ENCODE measurements at regions of chr22 and their contacts with region 1.

Region 1: DNA sequence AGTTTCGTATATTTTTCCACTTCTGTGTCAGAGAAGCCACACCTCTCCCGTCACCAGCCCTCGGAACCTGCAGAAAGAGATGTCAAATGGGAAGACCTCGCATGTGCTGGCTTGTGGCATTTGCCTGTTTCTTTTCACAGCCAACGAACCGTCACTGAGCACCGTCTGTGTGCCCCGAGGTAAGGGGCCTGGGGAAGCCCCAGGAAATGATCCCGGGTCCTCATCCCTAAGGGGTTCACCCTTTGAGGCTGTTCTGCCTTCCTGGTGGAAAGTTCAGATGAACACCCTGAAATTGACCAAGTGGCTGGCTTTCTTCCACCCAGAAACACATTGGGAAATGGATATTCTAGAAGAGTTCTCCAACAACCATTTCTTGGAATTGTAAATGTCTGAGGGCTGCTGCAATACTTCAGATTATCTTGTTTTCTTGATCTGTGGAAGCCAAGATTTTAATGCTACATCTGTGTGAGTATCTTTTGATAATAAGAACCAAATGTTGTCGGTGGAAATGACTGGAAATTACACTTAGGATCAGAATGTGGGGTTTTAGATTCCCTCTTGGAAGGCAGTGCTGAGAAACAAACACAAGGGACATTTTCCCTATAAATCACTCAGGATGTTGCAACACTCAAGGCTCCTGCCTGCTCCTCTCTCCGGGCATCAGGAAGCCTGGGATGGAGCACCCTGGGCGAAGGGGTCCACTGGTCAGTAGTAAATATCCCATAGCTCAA is 37.6 kb downstream of the RIBC2 start:
- DNase-seq: no peak
- ATAC-seq: no peak
- H3K4me3 ChIP-seq: no peak overlapping the region
- H3K27ac ChIP-seq: no peak overlapping the region
- H3K4me1 ChIP-seq: no peaks in the 10 kb centered on the region
- H3K27me3 ChIP-seq: no peaks in the 10 kb centered on the region; a peak in 2 of 4 replicates
- CTCF ChIP-seq: no peak
- EP300 ChIP-seq: no peak
- POLR2A ChIP-seq: no peak
- RAD21 ChIP-seq: no peak

Region 2: DNA sequence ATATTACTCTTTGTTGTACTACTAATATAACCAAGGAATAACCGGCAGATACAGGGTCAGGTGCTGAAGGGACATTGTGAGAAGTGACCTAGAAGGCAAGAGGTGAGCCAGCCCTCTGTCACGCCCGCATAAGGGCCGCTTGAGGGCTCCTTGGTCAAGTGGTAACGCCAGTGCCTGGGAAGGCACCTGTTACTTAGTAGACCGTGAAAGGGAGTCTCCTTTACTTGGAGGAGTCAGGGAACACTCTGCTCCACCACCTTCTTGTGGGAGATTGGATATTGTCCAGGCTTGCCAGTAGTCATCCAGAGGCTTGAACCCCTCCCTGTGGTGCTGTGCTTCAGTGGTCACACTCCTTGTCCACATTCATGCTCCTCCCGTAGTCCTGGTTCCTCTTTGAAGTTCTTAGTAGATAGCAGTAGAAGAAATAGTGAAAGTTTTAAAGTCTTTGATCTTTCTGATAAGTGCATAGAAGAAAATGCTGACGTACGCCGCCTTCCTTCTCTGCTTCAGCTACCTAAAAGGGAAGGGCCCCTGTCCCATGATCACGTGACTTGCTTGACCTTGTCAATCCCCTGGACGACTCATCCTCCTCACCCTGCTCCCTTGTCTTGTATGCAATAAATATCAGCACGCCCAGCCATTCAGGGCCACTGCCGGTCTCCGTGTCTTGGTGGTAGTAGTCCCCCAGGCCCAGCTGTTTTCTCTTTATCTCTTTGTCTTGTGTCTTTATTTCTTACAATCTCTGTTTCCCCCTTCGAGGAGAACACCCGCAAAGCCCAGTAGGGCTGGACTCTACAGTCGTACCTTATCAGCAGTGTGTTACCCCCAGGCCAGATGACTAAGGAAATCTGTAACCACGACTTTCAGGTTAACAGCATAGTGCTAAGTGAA is 281.3 kb before region 1 on chr22:
- CTCF ChIA-PET with region 1: no interaction called
- POLR2A ChIA-PET with region 1: no interaction called
- RAD21 ChIA-PET with region 1: no interaction called
- SMC1A ChIA-PET with region 1: no interaction called
- in situ Hi-C with region 1: no loop called
- intact Hi-C with region 1: no loop called
- DNase-seq: no peak
- ATAC-seq: no peak
- H3K4me3 ChIP-seq: no peak overlapping the region
- H3K27ac ChIP-seq: no peak overlapping the region
- H3K4me1 ChIP-seq: peaks cover 3% of the 10 kb centered on the region
- H3K27me3 ChIP-seq: no peaks in the 10 kb centered on the region
- CTCF ChIP-seq: no peak
- EP300 ChIP-seq: no peak
- POLR2A ChIP-seq: no peak
- RAD21 ChIP-seq: no peak

Region 3: DNA sequence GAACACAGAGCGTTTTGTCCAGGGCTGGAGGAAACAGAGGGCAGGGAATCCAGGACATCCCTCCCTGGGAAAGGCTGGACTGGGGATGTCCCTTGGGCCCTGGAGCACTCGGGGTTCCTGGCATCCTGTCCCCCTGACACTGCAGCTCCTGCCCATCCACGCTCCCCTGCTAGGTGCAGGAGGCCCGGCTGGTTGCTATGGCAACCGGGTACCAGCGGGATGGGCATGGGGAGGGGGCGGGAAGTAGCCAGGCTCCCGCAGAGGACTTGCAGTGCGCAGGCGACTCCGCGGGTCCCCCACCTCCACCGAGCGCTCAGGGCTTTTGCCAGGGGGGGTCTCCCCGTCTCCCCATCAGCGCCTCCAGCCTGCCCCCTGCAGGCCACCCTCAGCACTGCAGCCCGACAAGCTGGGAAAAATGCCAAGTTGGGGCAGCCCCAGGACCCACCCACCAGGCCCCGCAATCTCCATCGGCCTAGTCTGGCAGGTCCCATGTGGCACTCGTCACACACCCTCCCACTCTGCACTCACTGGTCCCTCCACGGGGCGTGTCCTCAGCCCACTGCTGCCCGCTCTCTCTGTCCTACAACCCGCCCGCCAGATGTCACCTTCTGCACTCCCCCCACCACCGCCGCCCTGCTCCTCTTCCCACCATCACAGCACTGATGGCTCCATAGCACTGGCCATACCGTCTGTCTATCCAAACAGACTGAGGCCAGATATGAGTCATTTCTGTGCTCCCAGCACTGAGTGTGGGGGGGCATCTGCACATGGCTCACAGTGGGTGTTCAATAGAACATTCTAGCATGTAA is 241.9 kb before region 1 on chr22:
- CTCF ChIA-PET with region 1: no interaction called
- POLR2A ChIA-PET with region 1: no interaction called
- RAD21 ChIA-PET with region 1: no interaction called
- SMC1A ChIA-PET with region 1: no interaction called
- in situ Hi-C with region 1: no loop called
- intact Hi-C with region 1: no loop called
- DNase-seq: no peak
- ATAC-seq: peak; percentile 32
- H3K4me3 ChIP-seq: no peak overlapping the region
- H3K27ac ChIP-seq: no peak overlapping the region
- H3K4me1 ChIP-seq: peaks cover 7% of the 10 kb centered on the region
- H3K27me3 ChIP-seq: no peaks in the 10 kb centered on the region
- CTCF ChIP-seq: peak; percentile 41 to 88 (median 65)
- EP300 ChIP-seq: no peak
- POLR2A ChIP-seq: no peak
- RAD21 ChIP-seq: 0 out of 2 replicates have a peak, but pooled peaks have one; percentile 32

Region 4: DNA sequence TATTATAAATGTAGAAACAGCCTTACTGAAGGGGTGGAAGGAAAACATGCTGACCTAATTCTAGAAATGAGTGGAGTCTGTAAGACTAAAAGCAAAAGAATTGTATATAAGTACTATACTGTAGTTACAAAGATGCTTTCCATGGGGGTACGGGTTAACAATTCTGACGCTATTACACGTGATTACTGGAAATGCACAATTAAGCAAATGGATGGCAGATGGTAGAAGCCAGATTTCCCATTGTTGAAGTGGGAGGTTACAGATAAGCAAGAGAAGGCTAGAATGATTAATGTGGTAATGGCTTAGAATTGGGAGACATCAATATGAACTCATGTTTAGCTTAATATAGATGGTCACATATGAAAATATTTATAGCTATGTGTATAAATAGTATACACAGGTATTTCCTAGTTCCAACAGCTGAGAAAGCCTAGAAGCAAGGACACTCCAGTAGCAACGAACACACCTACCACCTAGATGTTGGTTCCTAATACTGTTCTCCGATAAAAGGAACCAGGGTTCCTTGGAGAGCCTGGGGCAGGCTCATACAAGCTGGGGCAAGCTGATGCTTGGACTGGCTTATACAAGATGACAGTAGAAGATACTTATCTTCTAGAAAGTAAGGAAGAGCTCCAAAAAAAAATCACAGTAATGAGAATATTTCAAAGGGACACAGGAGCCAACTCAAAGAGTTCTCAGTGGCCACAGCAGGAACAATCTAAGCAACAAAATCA is 51.2 kb before region 1 on chr22:
- CTCF ChIA-PET with region 1: no interaction called
- POLR2A ChIA-PET with region 1: no interaction called
- RAD21 ChIA-PET with region 1: no interaction called
- SMC1A ChIA-PET with region 1: no interaction called
- in situ Hi-C with region 1: loop called (anchors 5 kb)
- intact Hi-C with region 1: no loop called
- DNase-seq: no peak
- ATAC-seq: no peak
- H3K4me3 ChIP-seq: no peak overlapping the region
- H3K27ac ChIP-seq: no peak overlapping the region
- H3K4me1 ChIP-seq: no peaks in the 10 kb centered on the region
- H3K27me3 ChIP-seq: no peaks in the 10 kb centered on the region
- CTCF ChIP-seq: no peak
- EP300 ChIP-seq: no peak
- POLR2A ChIP-seq: no peak
- RAD21 ChIP-seq: no peak

Region 5: DNA sequence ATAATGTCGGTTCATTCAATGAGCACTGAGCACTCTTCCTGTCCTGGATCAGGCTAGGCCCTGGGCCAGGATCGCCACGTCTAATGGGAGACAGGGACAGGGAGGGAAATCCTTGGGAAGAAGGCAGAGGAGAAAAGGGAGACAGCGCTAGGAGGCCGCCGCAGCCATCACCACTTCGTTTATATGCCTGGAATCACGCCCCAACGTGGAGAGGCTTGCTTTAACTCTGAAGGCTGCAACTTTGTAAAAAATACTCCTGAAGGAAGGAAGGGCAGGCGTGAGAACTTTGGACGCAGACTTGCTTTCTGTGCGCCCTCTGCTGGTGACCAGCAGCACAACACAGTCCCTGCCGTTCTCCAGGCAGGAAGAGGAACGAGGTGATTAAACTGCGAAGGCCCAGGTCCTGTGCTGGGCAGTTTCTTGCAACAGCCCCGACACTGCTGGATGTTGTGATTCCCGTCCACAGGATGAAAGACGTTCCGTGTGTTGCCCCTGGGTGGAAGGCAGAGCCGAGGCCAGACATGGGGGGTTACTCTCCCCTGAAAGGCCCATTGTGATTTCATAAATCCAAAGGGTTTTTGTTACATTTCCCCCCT is 15.4 kb before region 1 on chr22:
- CTCF ChIA-PET with region 1: no interaction called
- POLR2A ChIA-PET with region 1: no interaction called
- RAD21 ChIA-PET with region 1: no interaction called
- SMC1A ChIA-PET with region 1: no interaction called
- in situ Hi-C with region 1: no loop called
- intact Hi-C with region 1: no loop called
- DNase-seq: peak; percentile 35
- ATAC-seq: peak; percentile 98
- H3K4me3 ChIP-seq: no peak overlapping the region
- H3K27ac ChIP-seq: no peak overlapping the region
- H3K4me1 ChIP-seq: no peaks in the 10 kb centered on the region; the same call in 1 of the 2 replicates
- H3K27me3 ChIP-seq: no peaks in the 10 kb centered on the region
- CTCF ChIP-seq: peak; percentile 89 to 94 (median 93)
- EP300 ChIP-seq: no peak
- POLR2A ChIP-seq: no peak
- RAD21 ChIP-seq: peak; percentile 76